GM18951 (cell line): ENCODE measurements at regions of chr7 and their contacts with region 1.

Region 1: GRCh38 chr7:121081327-121081936 is 92.9 kb downstream of the CPED1 start:
- POLR2A ChIP-seq: no peak

Region 2: DNA sequence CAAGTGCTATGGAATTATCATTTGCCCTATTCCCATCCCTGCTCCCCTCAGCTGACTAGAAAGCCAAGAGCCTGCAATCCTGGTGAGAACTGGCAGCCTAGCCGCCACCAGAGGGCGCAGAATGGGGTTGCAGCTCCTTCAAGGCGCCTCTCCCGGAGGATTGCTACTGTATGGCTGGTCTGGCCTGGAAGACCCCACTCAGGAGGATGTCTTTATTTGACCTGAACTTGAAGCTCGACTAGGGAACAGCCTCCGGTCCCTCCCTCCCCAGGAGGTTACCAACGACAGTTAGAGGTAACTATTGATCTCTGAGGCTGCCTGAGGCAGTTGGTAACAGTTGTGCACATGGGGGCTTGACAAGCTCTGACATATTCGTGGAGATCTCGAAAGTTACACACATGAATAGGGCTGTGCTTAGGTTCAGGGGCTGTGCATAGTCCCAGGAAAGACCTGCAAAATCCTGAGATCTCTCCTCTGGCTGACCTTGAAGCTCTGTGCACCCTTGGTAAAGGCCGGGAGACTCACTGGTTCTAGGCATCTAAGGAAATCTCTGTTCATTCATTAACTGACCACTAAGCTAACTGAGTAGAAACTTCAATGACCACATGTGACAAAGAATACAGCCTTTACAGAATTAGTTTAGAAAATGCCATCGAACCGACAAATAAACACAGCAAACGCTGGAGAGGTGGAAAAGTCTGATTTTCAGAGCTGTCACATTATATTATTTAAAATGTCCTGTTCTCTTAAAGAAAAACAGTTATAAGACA is 289.2 kb before region 1 on chr7:
- in situ Hi-C with region 1: loop called (anchors 25 kb)
- POLR2A ChIP-seq: no peak